ENCODE measurements at regions of chr12 and their contacts with region 1.

Region 1: GRCh38 chr12:70242695-70243509 is at the start of gene CNOT2:
- DNase-seq: peak; percentile 76 to 91 (median 90)
- ATAC-seq: peak; percentile 89
- H3K4me3 ChIP-seq: peak within 1 kb of the TSS; percentile 80
- H3K4me3 Mint-ChIP-seq: peak within 1 kb of the TSS; percentile 96 to 100 (median 98)
- H3K27ac ChIP-seq: peak within 1 kb of the TSS; percentile 99
- H3K27ac Mint-ChIP-seq: peak within 1 kb of the TSS; percentile 94 to 100 (median 99)
- H3K4me1 ChIP-seq: peaks cover 33 to 41% of the 10 kb centered on the region in 2 donors
- H3K4me1 Mint-ChIP-seq: peaks cover 43 to 77% (median 70%) of the 10 kb centered on the region in 7 donors
- H3K27me3 ChIP-seq: no peaks in the 10 kb centered on the region
- H3K27me3 Mint-ChIP-seq: peaks cover 0 to 3% (median 0%) of the 10 kb centered on the region in 5 donors
- total RNA-seq, gene CNOT2: 76.2 to 144 (median 116) TPM

Region 2: DNA sequence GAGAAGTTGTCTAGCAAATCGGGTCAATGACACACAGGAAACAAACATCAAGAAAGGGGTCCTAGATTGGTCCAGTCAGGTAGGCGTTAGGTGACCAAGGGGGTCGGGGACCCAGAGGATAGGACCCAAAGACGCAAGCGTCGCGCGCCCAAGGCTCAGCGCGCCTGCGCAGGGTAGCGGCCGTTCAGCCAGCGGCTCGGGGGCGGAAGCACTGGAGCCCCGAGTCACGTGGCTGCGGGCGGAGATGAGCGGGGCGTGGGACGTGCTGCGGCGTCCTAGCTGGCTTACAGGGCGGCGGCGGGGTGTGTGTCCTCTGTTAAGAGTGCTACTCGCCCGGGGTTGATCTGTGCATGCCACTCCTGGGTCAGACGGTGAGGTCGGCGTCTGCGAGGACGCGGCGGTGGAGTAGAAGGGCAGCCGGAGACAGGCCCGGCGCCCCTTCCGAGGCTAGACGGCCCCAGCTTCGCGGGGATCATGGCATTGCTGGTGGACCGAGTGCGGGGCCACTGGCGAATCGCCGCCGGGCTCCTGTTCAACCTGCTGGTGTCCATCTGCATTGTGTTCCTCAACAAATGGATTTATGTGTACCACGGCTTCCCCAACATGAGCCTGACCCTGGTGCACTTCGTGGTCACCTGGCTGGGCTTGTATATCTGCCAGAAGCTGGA is 1496.9 kb before region 1 on chr12 and contains the start of gene SLC35E3:
- CTCF ChIA-PET with region 1: no interaction called
- POLR2A ChIA-PET with region 1: no interaction called
- intact Hi-C with region 1: loop called in 1 of 2 experiments (anchors 5 kb)
- DNase-seq: peak; percentile 81 to 91 (median 86)
- ATAC-seq: peak; percentile 99
- H3K4me3 ChIP-seq: peak within 1 kb of the TSS; percentile 98
- H3K4me3 Mint-ChIP-seq: peak within 1 kb of the TSS; percentile 91 to 99 (median 96)
- H3K27ac ChIP-seq: peak within 1 kb of the TSS; percentile 79
- H3K27ac Mint-ChIP-seq: peak within 1 kb of the TSS; percentile 92 to 97 (median 96)
- H3K4me1 ChIP-seq: peaks cover 7 to 16% of the 10 kb centered on the region in 2 donors
- H3K4me1 Mint-ChIP-seq: peaks cover 27 to 64% (median 54%) of the 10 kb centered on the region in 7 donors
- H3K27me3 ChIP-seq: no peaks in the 10 kb centered on the region
- H3K27me3 Mint-ChIP-seq: no peaks in the 10 kb centered on the region
- total RNA-seq, gene SLC35E3: 9.0 to 12.1 (median 9.2) TPM

Region 3: GRCh38 chr12:69359531-69360347 is 883.2 kb before region 1 on chr12 and contains the start of gene YEATS4:
- CTCF ChIA-PET with region 1: no interaction called
- POLR2A ChIA-PET with region 1: no interaction called
- intact Hi-C with region 1: loop called in 1 of 2 experiments (anchors 2 kb)
- DNase-seq: peak; percentile 73 to 93 (median 84)
- ATAC-seq: peak; percentile 86
- H3K4me3 ChIP-seq: peak within 1 kb of the TSS; percentile 76
- H3K4me3 Mint-ChIP-seq: peak within 1 kb of the TSS; percentile 82 to 93 (median 89)
- H3K27ac ChIP-seq: peak within 1 kb of the TSS; percentile 93
- H3K27ac Mint-ChIP-seq: peak within 1 kb of the TSS; percentile 80 to 96 (median 91)
- H3K4me1 ChIP-seq: peaks cover 5 to 6% of the 10 kb centered on the region in 2 donors
- H3K4me1 Mint-ChIP-seq: peaks cover 11 to 32% (median 25%) of the 10 kb centered on the region in 7 donors
- H3K27me3 ChIP-seq: no peaks in the 10 kb centered on the region
- H3K27me3 Mint-ChIP-seq: peaks cover 0 to 3% (median 0%) of the 10 kb centered on the region in 5 donors
- total RNA-seq, gene YEATS4: 16.5 to 34.9 (median 21.4) TPM

Region 4: DNA sequence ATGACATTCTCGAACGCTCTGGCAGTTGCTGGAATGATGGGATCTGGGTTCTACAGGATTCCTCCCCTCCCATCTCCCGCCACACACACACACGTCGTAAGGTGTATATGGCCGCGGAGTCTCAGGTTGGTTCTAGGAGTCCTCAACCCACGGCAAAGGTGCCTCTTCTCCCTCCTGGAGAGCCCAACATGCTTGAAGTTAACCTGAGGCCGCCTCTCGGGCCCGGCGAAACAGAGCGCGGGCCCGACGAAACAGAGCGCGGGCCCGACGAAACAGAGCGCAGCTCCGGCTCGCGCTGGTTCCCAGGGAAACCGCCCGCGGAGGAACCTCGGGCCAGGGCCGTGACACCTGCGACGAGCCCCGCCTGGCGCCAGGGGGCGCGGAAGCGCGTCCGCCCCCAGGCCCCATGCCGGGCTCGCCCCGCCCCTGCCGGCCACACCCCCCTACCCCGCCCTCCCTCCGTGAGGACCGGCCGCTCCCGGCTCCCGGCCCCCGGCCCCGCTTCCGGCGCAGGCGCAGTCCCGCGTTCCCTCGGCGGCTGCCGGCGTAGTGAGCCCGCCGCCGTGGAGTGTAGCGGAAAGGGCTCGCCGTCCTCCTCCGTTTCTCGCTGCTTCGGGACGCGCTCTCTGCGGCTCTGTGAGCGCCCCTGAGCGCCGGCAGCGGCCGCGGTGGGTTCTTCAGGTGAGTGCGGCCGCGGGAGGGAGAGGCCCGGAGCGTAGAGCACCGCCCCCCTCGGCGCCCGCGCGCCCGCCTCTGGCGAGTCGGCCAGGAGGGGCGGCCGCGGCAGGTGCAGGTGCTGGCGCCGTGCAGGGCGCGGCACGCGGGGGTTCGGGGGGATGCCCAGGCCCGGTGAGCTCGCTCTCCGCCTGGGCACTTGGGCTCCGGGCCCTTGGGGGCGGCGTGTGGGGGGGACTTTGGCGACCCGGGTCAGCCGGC is 504.3 kb before region 1 on chr12 and contains the start of gene RAB3IP:
- CTCF ChIA-PET with region 1: no interaction called
- POLR2A ChIA-PET with region 1: no interaction called
- intact Hi-C with region 1: loop called (anchors 1 to 2 kb)
- DNase-seq: peak; percentile 85 to 97 (median 90)
- ATAC-seq: peak; percentile 96
- H3K4me3 ChIP-seq: peak within 1 kb of the TSS; percentile 82
- H3K4me3 Mint-ChIP-seq: peak within 1 kb of the TSS; percentile 84 to 95 (median 89)
- H3K27ac ChIP-seq: peak within 1 kb of the TSS; percentile 78
- H3K27ac Mint-ChIP-seq: peak within 1 kb of the TSS; percentile 71 to 92 (median 81)
- H3K4me1 ChIP-seq: peaks cover 0 to 8% of the 10 kb centered on the region in 2 donors
- H3K4me1 Mint-ChIP-seq: peaks cover 14 to 37% (median 30%) of the 10 kb centered on the region in 7 donors
- H3K27me3 ChIP-seq: no peaks in the 10 kb centered on the region
- H3K27me3 Mint-ChIP-seq: peaks cover 0 to 40% (median 6%) of the 10 kb centered on the region in 5 donors
- total RNA-seq, gene RAB3IP: 23.5 to 29.7 (median 23.7) TPM

Region 5: GRCh38 chr12:70305794-70306193 is 62.9 kb after region 1 on chr12:
- CTCF ChIA-PET with region 1: no interaction called
- POLR2A ChIA-PET with region 1: interaction called, 8 read pairs
- intact Hi-C with region 1: loop called (anchors 1 kb)
- DNase-seq: no peak
- ATAC-seq: no peak
- H3K4me3 ChIP-seq: no peak overlapping the region
- H3K4me3 Mint-ChIP-seq: peak overlapping the region in 1 of 10 donors; percentile 75
- H3K27ac ChIP-seq: no peak overlapping the region
- H3K27ac Mint-ChIP-seq: peak overlapping the region in 2 of 9 donors; percentile 22 to 26
- H3K4me1 ChIP-seq: peaks cover 12 to 13% of the 10 kb centered on the region in 2 donors
- H3K4me1 Mint-ChIP-seq: peaks cover 32 to 68% (median 54%) of the 10 kb centered on the region in 7 donors
- H3K27me3 ChIP-seq: no peaks in the 10 kb centered on the region
- H3K27me3 Mint-ChIP-seq: no peaks in the 10 kb centered on the region

Region 6: GRCh38 chr12:71685914-71686665 is 1443.2 kb after region 1 on chr12 and contains the start of gene TMEM19:
- CTCF ChIA-PET with region 1: no interaction called
- POLR2A ChIA-PET with region 1: no interaction called
- intact Hi-C with region 1: loop called in 1 of 2 experiments (anchors 5 kb)
- DNase-seq: peak; percentile 78 to 88 (median 86)
- ATAC-seq: peak; percentile 90
- H3K4me3 ChIP-seq: peak within 1 kb of the TSS; percentile 96
- H3K4me3 Mint-ChIP-seq: peak within 1 kb of the TSS; percentile 85 to 99 (median 94)
- H3K27ac ChIP-seq: peak within 1 kb of the TSS; percentile 87
- H3K27ac Mint-ChIP-seq: peak within 1 kb of the TSS; percentile 85 to 97 (median 91)
- H3K4me1 ChIP-seq: peaks cover 21 to 23% of the 10 kb centered on the region in 2 donors
- H3K4me1 Mint-ChIP-seq: peaks cover 15 to 55% (median 38%) of the 10 kb centered on the region in 7 donors
- H3K27me3 ChIP-seq: no peaks in the 10 kb centered on the region
- H3K27me3 Mint-ChIP-seq: no peaks in the 10 kb centered on the region
- total RNA-seq, gene TMEM19: 13.9 to 17.7 (median 14.7) TPM